ENCODE measurements at regions of chr19 and their contacts with region 1.

Region 1: DNA sequence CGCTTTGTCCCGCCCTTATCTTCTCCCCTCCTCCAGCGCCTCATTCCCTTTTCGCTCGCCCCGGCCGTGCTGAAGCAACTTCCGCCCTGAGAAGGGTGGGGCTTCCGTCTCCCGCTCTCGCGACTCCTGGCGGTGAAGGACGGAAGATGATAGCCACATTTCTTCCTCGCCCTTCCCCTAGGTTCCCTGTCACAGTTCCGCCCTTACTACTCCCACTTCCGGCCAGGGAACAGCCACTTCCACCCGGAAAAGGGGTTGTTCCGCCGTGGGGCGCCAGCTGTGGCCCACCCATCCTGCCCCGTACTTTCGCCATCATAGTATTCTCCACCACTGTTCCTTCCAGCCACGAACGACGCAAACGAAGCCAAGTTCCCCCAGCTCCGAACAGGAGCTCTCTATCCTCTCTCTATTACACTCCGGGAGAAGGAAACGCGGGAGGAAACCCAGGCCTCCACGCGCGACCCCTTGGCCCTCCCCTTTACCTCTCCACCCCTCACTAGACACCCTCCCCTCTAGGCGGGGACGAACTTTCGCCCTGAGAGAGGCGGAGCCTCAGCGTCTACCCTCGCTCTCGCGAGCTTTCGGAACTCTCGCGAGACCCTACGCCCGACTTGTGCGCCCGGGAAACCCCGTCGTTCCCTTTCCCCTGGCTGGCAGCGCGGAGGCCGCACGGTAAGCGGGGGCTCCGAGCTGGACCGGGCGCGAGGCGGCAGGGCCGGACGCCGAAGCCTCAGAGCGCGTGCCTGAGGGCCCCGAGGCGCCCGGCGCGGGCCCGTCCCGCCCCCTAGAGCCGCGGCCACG is at the start of gene RPS19:
- DNase-seq: peak; percentile 99
- H3K4me3 Mint-ChIP-seq: peak within 1 kb of the TSS; percentile 90
- H3K27ac Mint-ChIP-seq: peak within 1 kb of the TSS; percentile 97
- H3K4me1 Mint-ChIP-seq: peaks cover 46% of the 10 kb centered on the region
- H3K27me3 Mint-ChIP-seq: no peaks in the 10 kb centered on the region
- total RNA-seq, gene RPS19: 4,092 to 4,109 TPM

Region 2: GRCh38 chr19:41775360-41775695 is 84.5 kb before region 1 on chr19:
- CTCF ChIA-PET with region 1: no interaction called
- intact Hi-C with region 1: no loop called
- DNase-seq: no peak
- H3K4me3 Mint-ChIP-seq: no peak overlapping the region
- H3K27ac Mint-ChIP-seq: no peak overlapping the region
- H3K4me1 Mint-ChIP-seq: peaks cover 36% of the 10 kb centered on the region
- H3K27me3 Mint-ChIP-seq: peaks cover 73% of the 10 kb centered on the region

Region 3: GRCh38 chr19:41872775-41873647 is 13.2 kb after region 1 on chr19:
- CTCF ChIA-PET with region 1: interaction called, 10 read pairs
- intact Hi-C with region 1: loop called (anchors 1 kb)
- DNase-seq: peak; percentile 84
- H3K4me3 Mint-ChIP-seq: no peak overlapping the region
- H3K27ac Mint-ChIP-seq: peak overlapping the region; percentile 96
- H3K4me1 Mint-ChIP-seq: peaks cover 76% of the 10 kb centered on the region
- H3K27me3 Mint-ChIP-seq: no peaks in the 10 kb centered on the region

Region 4: DNA sequence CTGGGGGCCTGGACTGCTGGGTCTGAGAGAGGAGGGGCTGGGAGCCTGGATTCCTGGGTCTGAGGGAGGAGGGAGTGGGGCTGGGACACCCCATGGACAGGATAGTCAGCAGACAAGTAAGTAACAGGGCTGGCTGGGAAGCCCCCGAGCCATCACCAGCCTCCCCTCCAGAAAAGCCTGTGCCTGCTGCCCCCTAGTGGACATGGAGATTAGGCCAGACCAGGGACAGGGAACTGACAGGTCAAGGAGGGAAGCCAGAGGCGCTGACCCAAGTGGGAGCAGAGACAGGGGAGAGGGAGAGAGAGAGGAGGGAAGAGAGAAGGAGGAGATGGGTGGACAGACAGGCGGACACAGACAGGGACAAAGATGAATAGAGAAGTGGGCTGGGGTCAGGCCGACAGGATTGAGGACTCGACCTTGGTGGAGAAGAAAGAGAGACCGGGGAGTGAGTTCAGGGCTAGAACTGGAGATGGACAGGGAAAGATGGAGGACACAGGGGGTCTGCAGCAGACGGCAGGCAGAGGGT is 75.1 kb after region 1 on chr19:
- CTCF ChIA-PET with region 1: interaction called, 4 read pairs
- intact Hi-C with region 1: loop called (anchors 1 kb)
- DNase-seq: peak; percentile 94
- H3K4me3 Mint-ChIP-seq: no peak overlapping the region
- H3K27ac Mint-ChIP-seq: peak overlapping the region; percentile 44
- H3K4me1 Mint-ChIP-seq: peaks cover 39% of the 10 kb centered on the region
- H3K27me3 Mint-ChIP-seq: no peaks in the 10 kb centered on the region

Region 5: GRCh38 chr19:41951686-41952172 is 91.9 kb after region 1 on chr19:
- CTCF ChIA-PET with region 1: interaction called, 12 read pairs
- intact Hi-C with region 1: loop called (anchors 1 kb)
- DNase-seq: peak; percentile 95
- H3K4me3 Mint-ChIP-seq: no peak overlapping the region
- H3K27ac Mint-ChIP-seq: peak overlapping the region; percentile 63
- H3K4me1 Mint-ChIP-seq: peaks cover 14% of the 10 kb centered on the region
- H3K27me3 Mint-ChIP-seq: no peaks in the 10 kb centered on the region

Region 6: DNA sequence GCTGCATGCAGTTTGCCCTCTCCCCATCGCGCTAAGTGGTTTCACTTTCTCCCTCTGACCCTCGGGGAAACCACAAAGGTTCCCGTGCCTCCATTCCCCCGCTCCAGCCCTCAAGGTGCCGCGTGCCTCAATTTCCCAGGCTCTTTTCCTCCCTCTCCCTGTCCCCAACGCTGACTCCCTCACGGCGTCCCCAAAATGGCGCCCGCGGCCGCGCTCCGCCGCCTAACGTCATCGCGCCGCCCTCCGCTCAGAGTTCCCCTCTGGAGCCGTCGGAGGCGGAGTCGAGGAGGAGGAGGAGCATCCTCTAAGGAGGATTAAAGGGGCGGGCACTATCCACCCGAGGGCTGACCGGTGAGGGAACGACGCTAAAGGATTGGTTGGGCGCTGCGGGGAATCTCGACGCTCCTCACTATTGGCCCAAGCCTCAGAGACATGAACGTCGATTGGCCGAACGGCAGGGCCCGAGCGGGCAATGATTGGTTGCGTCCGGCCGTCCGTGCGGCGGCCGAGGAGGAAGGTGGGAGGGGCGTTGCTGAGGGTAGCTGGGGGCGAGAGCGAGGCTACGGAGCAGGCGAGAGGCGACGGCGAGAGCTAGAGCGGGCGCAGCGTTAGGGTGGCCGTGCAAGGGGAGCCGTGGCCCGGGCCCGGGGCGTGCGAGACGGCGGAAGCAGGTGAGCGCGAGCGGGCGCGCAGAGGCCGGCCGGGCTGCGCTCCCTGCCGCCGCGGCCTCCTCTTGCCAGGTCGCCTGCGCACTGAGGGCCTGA is 216.0 kb after region 1 on chr19 and contains the start of gene ZNF574:
- CTCF ChIA-PET with region 1: no interaction called
- intact Hi-C with region 1: loop called (anchors 2 kb)
- DNase-seq: peak; percentile 99
- H3K4me3 Mint-ChIP-seq: peak within 1 kb of the TSS; percentile 97
- H3K27ac Mint-ChIP-seq: peak within 1 kb of the TSS; percentile 96
- H3K4me1 Mint-ChIP-seq: peaks cover 22% of the 10 kb centered on the region
- H3K27me3 Mint-ChIP-seq: no peaks in the 10 kb centered on the region
- total RNA-seq, gene ZNF574: 8.4 to 8.8 TPM

Measured in activated naive CD4-positive, alpha-beta T cell treated with anti-CD3 and anti-CD28 coated beads for 36 hours (primary cell).